ENCODE measurements at regions of chr15 and their contacts with region 1.

Region 1: GRCh38 chr15:91302588-91303439 is 202.8 kb downstream of the SV2B start:
- DNase-seq: no peak
- ATAC-seq: peak; percentile 93 to 99 (median 96)
- H3K4me3 ChIP-seq: no peak overlapping the region
- H3K27ac ChIP-seq: no peak overlapping the region
- H3K4me1 ChIP-seq: no peaks in the 10 kb centered on the region
- H3K27me3 ChIP-seq: no peaks in the 10 kb centered on the region
- CTCF ChIP-seq: peak; percentile 62 to 80 (median 77)
- POLR2A ChIP-seq: no peak

Region 2: GRCh38 chr15:91192690-91193377 is 110.0 kb before region 1 on chr15:
- intact Hi-C with region 1: no loop called
- DNase-seq: no peak
- ATAC-seq: no peak
- H3K4me3 ChIP-seq: no peak overlapping the region
- H3K27ac ChIP-seq: no peak overlapping the region
- H3K4me1 ChIP-seq: peaks cover 0 to 2% (median 0%) of the 10 kb centered on the region in 4 donors
- H3K27me3 ChIP-seq: no peaks in the 10 kb centered on the region
- CTCF ChIP-seq: no peak
- POLR2A ChIP-seq: no peak

Region 3: GRCh38 chr15:91253605-91254004 is 49.2 kb before region 1 on chr15:
- intact Hi-C with region 1: no loop called
- DNase-seq: no peak
- ATAC-seq: no peak
- H3K4me3 ChIP-seq: no peak overlapping the region
- H3K27ac ChIP-seq: no peak overlapping the region
- H3K4me1 ChIP-seq: peaks cover 0 to 7% (median 0%) of the 10 kb centered on the region in 4 donors
- H3K27me3 ChIP-seq: no peaks in the 10 kb centered on the region
- CTCF ChIP-seq: no peak
- POLR2A ChIP-seq: no peak

Region 4: GRCh38 chr15:91369823-91370222 is 67.0 kb after region 1 on chr15:
- intact Hi-C with region 1: no loop called
- DNase-seq: no peak
- ATAC-seq: peak in 3 of 4 donors; percentile 44 to 70 (median 48)
- H3K4me3 ChIP-seq: no peak overlapping the region
- H3K27ac ChIP-seq: no peak overlapping the region
- H3K4me1 ChIP-seq: no peaks in the 10 kb centered on the region
- H3K27me3 ChIP-seq: no peaks in the 10 kb centered on the region
- CTCF ChIP-seq: no peak
- POLR2A ChIP-seq: no peak

Region 5: GRCh38 chr15:91426412-91426811 is 123.6 kb after region 1 on chr15:
- intact Hi-C with region 1: no loop called
- DNase-seq: no peak
- ATAC-seq: no peak
- H3K4me3 ChIP-seq: no peak overlapping the region
- H3K27ac ChIP-seq: no peak overlapping the region
- H3K4me1 ChIP-seq: no peaks in the 10 kb centered on the region
- H3K27me3 ChIP-seq: no peaks in the 10 kb centered on the region
- CTCF ChIP-seq: no peak
- POLR2A ChIP-seq: no peak

Region 6: GRCh38 chr15:91515188-91515754 is 212.5 kb after region 1 on chr15:
- intact Hi-C with region 1: loop called (anchors 5 to 10 kb)
- DNase-seq: no peak
- ATAC-seq: peak in 2 of 4 donors; percentile 31 to 71
- H3K4me3 ChIP-seq: no peak overlapping the region
- H3K27ac ChIP-seq: no peak overlapping the region
- H3K4me1 ChIP-seq: peaks cover 0 to 5% (median 2%) of the 10 kb centered on the region in 4 donors
- H3K27me3 ChIP-seq: no peaks in the 10 kb centered on the region
- CTCF ChIP-seq: no peak
- POLR2A ChIP-seq: no peak

Region 7: DNA sequence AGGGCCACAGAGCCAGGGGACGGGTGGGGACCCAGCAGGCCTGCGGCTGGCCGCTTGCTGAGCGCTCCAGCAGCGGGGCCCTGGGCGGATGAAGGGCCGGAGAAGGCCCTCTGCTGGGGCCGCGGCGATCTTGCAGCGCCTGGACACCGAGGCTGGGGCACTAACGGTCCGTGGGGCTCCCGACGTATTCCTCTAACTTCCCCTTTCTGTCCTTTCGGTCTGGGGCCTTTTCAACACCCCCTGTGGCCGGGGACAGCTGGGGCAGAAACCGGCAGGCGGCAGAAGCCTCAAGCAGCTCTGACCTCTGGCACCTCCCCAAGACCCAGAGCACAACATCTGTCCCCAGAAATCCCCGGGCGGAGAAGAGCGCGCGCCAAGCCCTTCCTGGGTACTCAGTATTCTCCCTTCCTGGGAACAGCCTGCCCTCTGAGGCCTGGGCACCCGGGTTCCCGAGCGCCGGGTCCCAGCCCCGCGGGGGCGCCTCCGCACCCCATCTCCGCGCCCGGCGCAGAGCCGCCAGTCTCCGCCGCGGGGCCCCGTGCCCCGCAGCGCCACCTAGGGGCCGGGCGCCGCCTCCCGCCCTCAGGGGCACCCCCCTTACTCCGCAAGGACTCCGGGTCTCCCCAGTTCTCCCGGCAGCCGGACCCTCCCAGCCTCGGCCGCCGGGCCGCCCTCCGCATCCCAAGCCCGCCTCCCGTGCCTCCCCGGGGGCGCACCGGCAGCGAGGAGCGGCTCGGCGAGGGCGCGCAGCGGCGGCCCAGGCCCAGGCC is 550.1 kb after region 1 on chr15:
- intact Hi-C with region 1: loop called in 1 of 2 experiments (anchors 10 kb)
- DNase-seq: peak; percentile 76 to 85 (median 82)
- ATAC-seq: peak; percentile 83 to 87 (median 86)
- H3K4me3 ChIP-seq: peak overlapping the region; percentile 63 to 65 (median 64)
- H3K27ac ChIP-seq: peak overlapping the region; percentile 79 to 86 (median 81)
- H3K4me1 ChIP-seq: peaks cover 0 to 10% (median 0%) of the 10 kb centered on the region in 4 donors
- H3K27me3 ChIP-seq: peaks cover 0 to 4% of the 10 kb centered on the region in 2 donors
- CTCF ChIP-seq: peak; percentile 64 to 77 (median 72)
- POLR2A ChIP-seq: no peak

Measured in right lobe of liver (tissue), 6 donors.